ENCODE measurements at regions of chr6 and their contacts with region 1.

Region 1: DNA sequence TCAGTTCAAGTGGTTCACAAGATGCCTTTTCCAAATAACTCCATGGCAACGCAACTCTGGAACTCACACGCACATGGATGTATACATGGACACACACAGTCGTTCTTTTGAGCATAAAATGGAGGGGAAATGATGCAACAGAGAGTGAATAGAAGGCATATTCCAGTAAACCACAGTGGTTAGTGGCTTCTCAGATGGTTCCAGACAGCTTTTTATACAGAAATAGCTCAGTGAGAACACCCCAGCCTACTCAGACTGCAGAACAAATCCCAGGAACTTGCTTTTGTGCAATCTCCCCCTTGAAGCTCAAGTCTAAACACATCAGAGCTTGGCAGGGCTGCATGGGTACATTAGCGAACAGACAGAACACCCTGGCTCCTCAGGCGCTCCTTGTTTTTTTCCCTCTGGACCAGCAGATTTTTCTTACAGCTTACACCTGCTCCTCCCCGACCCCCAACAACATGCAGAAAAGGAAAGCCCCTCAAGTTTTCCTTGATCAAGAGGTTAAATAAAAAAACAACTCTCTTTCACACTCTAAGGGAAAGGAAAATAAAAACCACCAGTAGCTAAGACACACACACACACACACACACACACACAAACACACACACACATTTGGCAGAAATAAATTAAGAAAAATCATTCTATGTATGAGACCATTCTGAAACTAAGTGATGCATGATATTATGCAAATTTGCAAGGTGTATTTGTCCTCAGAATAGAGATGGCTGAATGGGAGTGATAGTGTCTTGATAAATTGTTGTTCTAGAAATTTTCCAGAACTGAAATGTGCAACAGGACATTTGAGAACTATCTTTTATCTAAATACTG is 51.2 kb upstream of the RANBP9 start:
- DNase-seq: peak; percentile 91
- H3K4me3 Mint-ChIP-seq: peak overlapping the region; percentile 11
- H3K27ac Mint-ChIP-seq: peak overlapping the region; percentile 86
- H3K4me1 Mint-ChIP-seq: peaks cover 42% of the 10 kb centered on the region
- H3K27me3 Mint-ChIP-seq: no peaks in the 10 kb centered on the region
- CTCF ChIP-seq: no peak

Region 2: DNA sequence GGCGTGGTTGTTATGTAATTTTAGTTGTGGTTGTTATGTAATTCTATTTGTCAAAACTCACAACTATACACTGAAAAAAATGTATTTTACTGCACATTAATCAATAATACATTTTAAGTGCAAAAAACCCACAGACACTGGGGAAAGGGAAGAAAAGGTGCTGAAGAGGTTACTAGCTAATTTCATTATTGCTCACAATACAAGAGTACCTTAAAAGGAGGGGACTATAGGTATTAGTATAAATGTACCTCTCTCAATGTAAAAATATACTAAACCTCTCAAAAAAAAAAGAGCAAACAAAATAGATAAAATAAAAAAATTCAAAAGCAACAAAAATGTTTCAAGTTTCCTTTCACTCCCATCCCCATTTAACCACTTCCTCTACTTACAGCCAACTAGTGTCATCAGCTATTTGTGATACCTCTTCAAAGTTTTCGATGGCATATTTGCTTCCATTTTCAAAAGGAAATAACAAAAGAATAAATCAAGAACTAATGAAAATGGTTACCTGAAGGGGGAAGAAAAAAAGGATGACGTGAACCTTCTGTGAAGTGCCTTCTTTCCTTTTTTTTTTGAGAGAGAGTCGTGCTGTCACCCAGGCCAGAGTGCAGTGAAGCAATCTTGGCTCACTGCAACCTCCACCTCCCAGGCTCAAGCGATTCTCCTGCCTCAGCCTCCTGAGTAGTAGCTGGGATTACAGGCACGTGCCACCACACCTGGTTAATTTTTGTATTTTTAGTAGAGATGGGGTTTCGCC is 81.3 kb before region 1 on chr6:
- CTCF ChIA-PET with region 1: no interaction called
- POLR2A ChIA-PET with region 1: no interaction called
- intact Hi-C with region 1: no loop called
- DNase-seq: no peak
- H3K4me3 Mint-ChIP-seq: no peak overlapping the region
- H3K27ac Mint-ChIP-seq: no peak overlapping the region
- H3K4me1 Mint-ChIP-seq: no peaks in the 10 kb centered on the region
- H3K27me3 Mint-ChIP-seq: no peaks in the 10 kb centered on the region
- CTCF ChIP-seq: no peak

Region 3: GRCh38 chr6:13733178-13733887 is 29.5 kb before region 1 on chr6:
- CTCF ChIA-PET with region 1: interaction called, 4 read pairs
- POLR2A ChIA-PET with region 1: interaction called, 13 read pairs
- intact Hi-C with region 1: no loop called
- DNase-seq: peak; percentile 86
- H3K4me3 Mint-ChIP-seq: peak overlapping the region; percentile 69
- H3K27ac Mint-ChIP-seq: peak overlapping the region; percentile 68
- H3K4me1 Mint-ChIP-seq: peaks cover 23% of the 10 kb centered on the region
- H3K27me3 Mint-ChIP-seq: no peaks in the 10 kb centered on the region
- CTCF ChIP-seq: no peak

Measured in MCF 10A (cell line).